ENCODE measurements at regions of chr20 and their contacts with region 1.

Region 1: GRCh38 chr20:47379433-47380150 is 23.1 kb upstream of the ZMYND8 start:
- DNase-seq: no peak
- ATAC-seq: no peak
- H3K4me3 Mint-ChIP-seq: no peak overlapping the region
- H3K27ac Mint-ChIP-seq: peak overlapping the region; percentile 18
- H3K4me1 Mint-ChIP-seq: peaks cover 27% of the 10 kb centered on the region
- H3K27me3 Mint-ChIP-seq: no peaks in the 10 kb centered on the region
- CTCF ChIP-seq: no peak

Region 2: DNA sequence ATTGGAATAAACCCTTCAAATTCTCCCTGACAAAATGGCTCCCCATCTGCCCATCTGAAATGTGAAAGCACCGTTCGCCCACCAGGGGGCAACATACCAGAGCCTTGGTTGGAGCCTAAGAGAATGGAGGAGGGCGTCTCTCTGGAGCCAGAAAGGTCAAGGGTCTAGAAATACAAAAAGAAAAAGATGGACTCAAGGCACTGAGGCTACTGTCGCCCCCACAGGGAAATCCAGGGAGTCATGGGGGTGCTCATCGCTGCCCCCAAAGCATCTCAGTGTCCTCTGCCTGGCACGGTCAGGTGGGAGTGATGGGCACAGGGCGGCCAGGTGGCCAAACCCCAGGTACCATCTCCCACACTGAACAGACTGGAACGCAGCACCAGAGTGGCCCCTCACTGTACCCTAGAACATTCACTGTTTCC is 159.4 kb before region 1 on chr20:
- CTCF ChIA-PET with region 1: interaction called, 79 read pairs
- POLR2A ChIA-PET with region 1: no interaction called
- intact Hi-C with region 1: no loop called
- DNase-seq: peak; percentile 69
- ATAC-seq: peak; percentile 69
- H3K4me3 Mint-ChIP-seq: no peak overlapping the region
- H3K27ac Mint-ChIP-seq: no peak overlapping the region
- H3K4me1 Mint-ChIP-seq: no peaks in the 10 kb centered on the region
- H3K27me3 Mint-ChIP-seq: no peaks in the 10 kb centered on the region
- CTCF ChIP-seq: peak; percentile 68

Region 3: DNA sequence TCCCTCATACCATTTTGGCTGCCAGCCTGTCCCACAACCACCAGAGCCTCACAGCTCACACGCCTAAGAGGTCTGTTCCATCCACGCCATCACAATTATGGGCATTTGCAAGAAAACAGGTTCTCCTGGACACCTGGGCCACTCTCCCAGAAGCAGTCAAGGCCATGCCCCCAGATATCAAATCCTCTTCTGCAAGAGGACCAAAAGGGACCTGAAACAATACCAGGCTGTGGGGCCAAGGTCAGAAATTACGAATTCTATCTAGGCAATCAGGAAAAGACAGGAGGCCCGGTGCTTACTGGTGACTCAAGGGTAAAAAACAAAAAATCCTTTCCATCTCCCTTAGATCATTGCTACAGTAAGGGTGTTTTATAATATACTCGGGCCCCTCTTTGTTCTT is 92.9 kb before region 1 on chr20:
- CTCF ChIA-PET with region 1: interaction called, 620 read pairs
- POLR2A ChIA-PET with region 1: no interaction called
- intact Hi-C with region 1: no loop called
- DNase-seq: no peak
- ATAC-seq: no peak
- H3K4me3 Mint-ChIP-seq: no peak overlapping the region
- H3K27ac Mint-ChIP-seq: no peak overlapping the region
- H3K4me1 Mint-ChIP-seq: no peaks in the 10 kb centered on the region
- H3K27me3 Mint-ChIP-seq: no peaks in the 10 kb centered on the region
- CTCF ChIP-seq: no peak

Region 4: GRCh38 chr20:47330933-47331864 is 48.4 kb before region 1 on chr20:
- CTCF ChIA-PET with region 1: interaction called, 11 read pairs
- POLR2A ChIA-PET with region 1: interaction called, 3 read pairs
- intact Hi-C with region 1: no loop called
- DNase-seq: peak; percentile 12
- ATAC-seq: peak; percentile 80
- H3K4me3 Mint-ChIP-seq: no peak overlapping the region
- H3K27ac Mint-ChIP-seq: peak overlapping the region; percentile 36
- H3K4me1 Mint-ChIP-seq: peaks cover 48% of the 10 kb centered on the region
- H3K27me3 Mint-ChIP-seq: no peaks in the 10 kb centered on the region
- CTCF ChIP-seq: no peak

Region 5: GRCh38 chr20:47411161-47411560 is 31.6 kb after region 1 on chr20:
- CTCF ChIA-PET with region 1: interaction called, 28 read pairs
- POLR2A ChIA-PET with region 1: no interaction called
- intact Hi-C with region 1: no loop called
- DNase-seq: no peak
- ATAC-seq: no peak
- H3K4me3 Mint-ChIP-seq: no peak overlapping the region
- H3K27ac Mint-ChIP-seq: no peak overlapping the region
- H3K4me1 Mint-ChIP-seq: peaks cover 28% of the 10 kb centered on the region
- H3K27me3 Mint-ChIP-seq: no peaks in the 10 kb centered on the region
- CTCF ChIP-seq: no peak

Region 6: GRCh38 chr20:47527004-47527757 is 147.6 kb after region 1 on chr20:
- CTCF ChIA-PET with region 1: interaction called, 14 read pairs
- POLR2A ChIA-PET with region 1: no interaction called
- intact Hi-C with region 1: no loop called
- DNase-seq: no peak
- ATAC-seq: no peak
- H3K4me3 Mint-ChIP-seq: no peak overlapping the region
- H3K27ac Mint-ChIP-seq: peak overlapping the region; percentile 26
- H3K4me1 Mint-ChIP-seq: peaks cover 45% of the 10 kb centered on the region
- H3K27me3 Mint-ChIP-seq: no peaks in the 10 kb centered on the region
- CTCF ChIP-seq: no peak